ENCODE measurements at regions of chr10 and their contacts with region 1.

Region 1: GRCh38 chr10:79242620-79243152 is 104.6 kb upstream of the PPIF start:
- DNase-seq: peak; percentile 83
- ATAC-seq: peak; percentile 30

Region 2: GRCh38 chr10:78892293-78893176 is 350.2 kb before region 1 on chr10:
- intact Hi-C with region 1: no loop called
- DNase-seq: peak; percentile 8
- ATAC-seq: no peak

Region 3: DNA sequence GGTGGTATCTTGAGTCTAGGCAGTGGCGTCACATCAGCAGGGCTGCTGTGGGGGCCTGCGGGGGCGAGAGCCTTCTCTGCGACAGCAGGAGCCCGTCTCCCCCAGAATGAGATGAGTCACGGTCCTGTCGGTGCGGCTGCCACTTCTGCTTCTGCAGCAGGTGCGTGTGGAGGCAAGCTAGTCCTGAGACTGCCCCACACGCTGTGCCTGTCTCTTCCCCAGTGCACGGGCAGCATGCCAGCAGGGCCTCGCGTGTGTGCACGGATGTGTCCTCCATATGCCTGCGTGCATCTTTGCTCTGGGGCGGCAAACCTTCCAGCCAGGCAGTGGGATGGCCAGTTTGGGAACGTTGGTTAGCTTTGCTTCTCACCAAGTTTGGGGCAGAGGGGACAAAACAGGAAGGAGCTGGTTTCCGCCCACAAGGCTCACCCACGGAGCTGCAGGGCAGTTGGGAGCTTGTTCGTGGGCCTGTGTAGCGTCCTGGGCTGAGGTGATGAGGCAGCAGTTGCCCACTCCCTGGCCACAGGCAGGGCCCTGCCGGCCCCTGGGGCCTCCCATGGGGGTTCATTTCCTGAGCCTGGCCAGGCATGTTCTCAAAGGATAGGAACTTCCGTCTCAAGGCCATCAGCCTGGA is 43.7 kb after region 1 on chr10:
- intact Hi-C with region 1: loop called (anchors 5 kb)
- DNase-seq: peak; percentile 95
- ATAC-seq: peak; percentile 45